PC-9 (cell line): ENCODE measurements at regions of chr11 and their contacts with region 1.

Region 1: GRCh38 chr11:72471005-72471898 is 36.9 kb upstream of the CLPB start:
- DNase-seq: peak; percentile 52 to 64
- H3K4me3 ChIP-seq: no peak overlapping the region
- H3K27ac ChIP-seq: no peak overlapping the region
- H3K4me1 ChIP-seq: no peaks in the 10 kb centered on the region
- H3K27me3 ChIP-seq: peaks cover 14% of the 10 kb centered on the region; the same call in 1 of the 2 replicates
- CTCF ChIP-seq: peak; percentile 96

Region 2: DNA sequence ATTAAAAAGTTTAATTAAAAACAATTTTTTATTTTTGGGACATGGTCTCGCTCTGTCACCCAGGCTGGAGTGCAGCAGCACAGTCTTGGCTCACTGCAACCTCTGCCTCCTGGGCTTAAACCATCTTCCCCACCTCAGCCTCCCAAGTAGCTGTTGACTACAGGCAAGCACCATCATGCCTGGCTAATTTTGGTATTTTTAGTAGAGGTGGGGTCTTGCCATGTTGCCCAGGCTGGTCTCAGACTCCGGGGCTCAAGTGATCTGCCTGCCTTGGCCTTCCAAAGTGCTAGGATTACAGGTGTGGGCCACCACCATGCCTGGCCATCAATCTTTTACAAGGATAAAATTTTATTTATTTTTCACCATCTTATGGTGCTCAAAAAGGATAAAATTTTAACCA is 184.0 kb before region 1 on chr11:
- CTCF ChIA-PET with region 1: no interaction called
- POLR2A ChIA-PET with region 1: no interaction called
- intact Hi-C with region 1: no loop called
- DNase-seq: no peak
- H3K4me3 ChIP-seq: no peak overlapping the region
- H3K27ac ChIP-seq: no peak overlapping the region
- H3K4me1 ChIP-seq: no peaks in the 10 kb centered on the region
- H3K27me3 ChIP-seq: peaks cover 5% of the 10 kb centered on the region; the same call in 1 of the 2 replicates
- CTCF ChIP-seq: no peak

Region 3: GRCh38 chr11:72441752-72442207 is 29.5 kb before region 1 on chr11:
- CTCF ChIA-PET with region 1: no interaction called
- POLR2A ChIA-PET with region 1: no interaction called
- intact Hi-C with region 1: no loop called
- DNase-seq: no peak
- H3K4me3 ChIP-seq: no peak overlapping the region
- H3K27ac ChIP-seq: no peak overlapping the region
- H3K4me1 ChIP-seq: no peaks in the 10 kb centered on the region
- H3K27me3 ChIP-seq: no peaks in the 10 kb centered on the region
- CTCF ChIP-seq: no peak

Region 4: DNA sequence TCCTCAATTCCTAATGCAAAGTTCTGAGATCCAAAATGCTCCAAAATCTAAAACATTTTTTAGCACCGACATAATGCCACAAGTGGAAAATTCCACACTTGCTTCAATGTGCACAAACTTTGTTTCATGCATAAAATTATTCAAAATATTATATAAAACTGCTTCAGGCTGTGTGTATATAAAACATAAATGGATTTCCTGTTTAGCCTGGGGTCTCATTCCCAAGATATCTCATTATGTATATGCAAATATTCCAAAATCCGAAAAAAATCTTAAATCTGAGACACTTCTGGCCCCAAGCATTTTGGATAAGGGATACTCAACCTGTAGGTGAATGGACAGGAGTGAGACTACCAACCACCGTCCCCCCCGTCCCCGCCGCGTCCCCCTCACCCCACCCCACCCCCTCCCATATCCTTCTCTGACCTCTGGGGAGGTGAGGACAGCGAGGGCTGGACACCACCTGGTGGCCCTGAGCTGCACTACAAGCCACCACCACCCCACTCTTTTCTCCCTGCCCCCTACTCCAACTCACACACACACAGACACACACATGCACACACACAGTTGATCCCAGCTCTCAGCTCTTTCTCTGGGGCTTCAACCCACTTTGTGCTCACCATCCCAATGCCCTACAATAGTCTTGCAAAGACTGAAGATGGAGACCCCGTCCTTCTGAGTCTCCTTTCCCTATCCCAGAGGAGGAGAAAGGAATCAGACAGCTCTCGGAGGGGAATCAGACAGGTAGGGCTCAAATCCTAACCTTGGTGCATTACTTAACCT is 102.0 kb after region 1 on chr11:
- CTCF ChIA-PET with region 1: interaction called, 31 read pairs
- POLR2A ChIA-PET with region 1: no interaction called
- intact Hi-C with region 1: loop called (anchors 1 kb)
- DNase-seq: peak in 1 of 2 experiments; percentile 54
- H3K4me3 ChIP-seq: no peak overlapping the region
- H3K27ac ChIP-seq: no peak overlapping the region
- H3K4me1 ChIP-seq: peaks cover 50% of the 10 kb centered on the region
- H3K27me3 ChIP-seq: no peaks in the 10 kb centered on the region
- CTCF ChIP-seq: peak; percentile 85

Region 5: DNA sequence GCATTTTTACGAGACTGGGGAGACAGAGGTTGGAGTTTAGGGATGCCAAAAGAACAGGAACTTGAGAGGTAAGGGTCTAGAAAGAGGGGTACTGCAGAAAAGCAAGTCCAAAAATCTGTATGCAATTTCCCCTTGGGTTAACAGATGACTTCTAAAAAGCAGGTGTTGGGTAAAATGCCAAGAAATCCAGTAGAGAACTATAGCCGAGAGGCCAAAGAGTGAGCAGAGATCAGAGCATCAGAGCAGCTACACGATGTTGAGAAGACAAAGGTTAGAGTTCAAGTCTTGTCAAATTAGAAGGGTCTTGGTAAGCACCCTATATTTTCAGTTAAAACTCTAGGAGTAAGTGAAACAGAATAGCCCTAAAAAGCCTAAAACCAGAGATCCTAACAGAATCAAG is 525.7 kb after region 1 on chr11:
- CTCF ChIA-PET with region 1: no interaction called
- POLR2A ChIA-PET with region 1: no interaction called
- intact Hi-C with region 1: no loop called
- DNase-seq: no peak
- H3K4me3 ChIP-seq: no peak overlapping the region
- H3K27ac ChIP-seq: no peak overlapping the region
- H3K4me1 ChIP-seq: peaks cover 18% of the 10 kb centered on the region
- H3K27me3 ChIP-seq: no peaks in the 10 kb centered on the region
- CTCF ChIP-seq: no peak